Gastrocnemius medialis (tissue), 4 donors: ENCODE measurements at regions of chr7 and their contacts with region 1.

Region 1: DNA sequence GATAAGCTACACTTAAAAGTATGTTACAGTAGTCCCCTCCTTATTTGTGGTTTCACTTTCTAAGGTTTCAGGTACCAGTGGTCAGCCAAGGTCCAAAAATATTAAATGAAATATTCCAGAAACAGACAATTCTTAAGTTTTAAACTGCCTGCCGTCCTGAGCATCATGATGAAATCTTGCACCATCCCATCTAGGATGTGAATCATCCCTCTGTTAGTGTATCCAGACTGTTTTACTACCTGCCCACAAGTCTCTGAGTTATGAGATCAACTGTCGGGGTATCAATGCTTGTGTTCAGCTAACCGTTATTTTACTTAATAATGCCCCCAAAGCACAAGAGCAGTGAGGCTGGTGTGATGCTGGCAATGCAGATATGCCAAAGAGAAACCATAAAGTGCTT is 11.4 kb downstream of the KDM7A start:
- DNase-seq: no peak
- ATAC-seq: peak; percentile 50 to 84
- H3K4me3 ChIP-seq: no peak overlapping the region
- H3K27ac ChIP-seq: no peak overlapping the region
- H3K4me1 ChIP-seq: peaks cover 46 to 59% of the 10 kb centered on the region in 2 donors
- H3K27me3 ChIP-seq: no peaks in the 10 kb centered on the region
- CTCF ChIP-seq: no peak
- POLR2A ChIP-seq: no peak

Region 2: GRCh38 chr7:139767561-139767982 is 397.9 kb before region 1 on chr7:
- in situ Hi-C with region 1: loop called in 1 of 4 experiments (anchors 25 kb)
- intact Hi-C with region 1: no loop called
- DNase-seq: no peak
- ATAC-seq: peak in 1 of 2 donors; percentile 8
- H3K4me3 ChIP-seq: no peak overlapping the region
- H3K27ac ChIP-seq: peak overlapping the region in 3 of 4 donors; percentile 7 to 24 (median 16)
- H3K4me1 ChIP-seq: peaks cover 50 to 53% of the 10 kb centered on the region in 2 donors
- H3K27me3 ChIP-seq: no peaks in the 10 kb centered on the region
- CTCF ChIP-seq: no peak
- POLR2A ChIP-seq: no peak

Region 3: DNA sequence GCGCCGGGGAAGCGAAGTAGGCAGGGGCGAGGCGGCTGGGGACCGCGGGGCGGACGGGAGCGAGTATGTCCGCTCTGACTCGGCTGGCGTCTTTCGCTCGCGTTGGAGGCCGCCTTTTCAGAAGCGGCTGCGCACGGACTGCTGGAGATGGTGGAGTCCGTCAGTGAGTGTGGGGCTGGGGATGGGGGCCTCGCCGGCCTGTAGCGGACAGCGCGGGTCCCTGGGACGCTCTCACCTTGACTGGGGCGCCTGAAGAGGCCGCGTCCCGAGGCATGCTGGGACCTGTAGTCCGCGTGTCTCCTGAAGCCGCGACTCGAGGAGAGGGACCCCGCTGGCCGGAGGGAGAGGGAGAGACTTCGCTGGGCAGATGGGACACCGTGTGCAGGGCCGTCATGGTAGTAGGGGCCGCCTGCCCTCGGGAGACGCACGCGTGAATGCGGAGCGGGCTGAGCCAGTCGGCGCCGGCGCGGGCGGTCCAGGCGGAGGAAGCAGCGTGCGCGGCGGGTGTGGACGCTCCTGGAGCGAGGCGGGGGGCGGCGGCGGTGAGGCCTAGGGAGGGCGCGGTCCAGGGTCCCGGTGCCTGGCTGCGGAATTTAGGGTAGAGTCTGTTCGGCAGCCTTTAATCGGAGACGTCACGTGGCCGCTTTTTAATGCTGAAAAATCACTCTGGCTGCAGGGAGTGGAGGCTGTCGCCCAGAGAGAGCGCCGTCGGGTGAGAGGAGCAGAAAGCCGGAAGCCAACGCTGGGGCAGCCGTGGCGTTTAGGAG is 531.4 kb after region 1 on chr7 and contains the start of gene NDUFB2:
- in situ Hi-C with region 1: no loop called
- intact Hi-C with region 1: loop called (anchors 10 kb)
- DNase-seq: peak; percentile 64 to 73
- ATAC-seq: peak; percentile 94 to 95
- H3K4me3 ChIP-seq: peak within 1 kb of the TSS; percentile 71 to 95 (median 88)
- H3K27ac ChIP-seq: peak within 1 kb of the TSS; percentile 84 to 98 (median 88)
- H3K4me1 ChIP-seq: peaks cover 14 to 16% of the 10 kb centered on the region in 2 donors
- H3K27me3 ChIP-seq: no peaks in the 10 kb centered on the region
- CTCF ChIP-seq: no peak
- POLR2A ChIP-seq: peak; percentile 92 to 94
- total RNA-seq, gene NDUFB2: 449 to 793 (median 538) TPM